ENCODE measurements at regions of chr12 and their contacts with region 1.

Region 1: DNA sequence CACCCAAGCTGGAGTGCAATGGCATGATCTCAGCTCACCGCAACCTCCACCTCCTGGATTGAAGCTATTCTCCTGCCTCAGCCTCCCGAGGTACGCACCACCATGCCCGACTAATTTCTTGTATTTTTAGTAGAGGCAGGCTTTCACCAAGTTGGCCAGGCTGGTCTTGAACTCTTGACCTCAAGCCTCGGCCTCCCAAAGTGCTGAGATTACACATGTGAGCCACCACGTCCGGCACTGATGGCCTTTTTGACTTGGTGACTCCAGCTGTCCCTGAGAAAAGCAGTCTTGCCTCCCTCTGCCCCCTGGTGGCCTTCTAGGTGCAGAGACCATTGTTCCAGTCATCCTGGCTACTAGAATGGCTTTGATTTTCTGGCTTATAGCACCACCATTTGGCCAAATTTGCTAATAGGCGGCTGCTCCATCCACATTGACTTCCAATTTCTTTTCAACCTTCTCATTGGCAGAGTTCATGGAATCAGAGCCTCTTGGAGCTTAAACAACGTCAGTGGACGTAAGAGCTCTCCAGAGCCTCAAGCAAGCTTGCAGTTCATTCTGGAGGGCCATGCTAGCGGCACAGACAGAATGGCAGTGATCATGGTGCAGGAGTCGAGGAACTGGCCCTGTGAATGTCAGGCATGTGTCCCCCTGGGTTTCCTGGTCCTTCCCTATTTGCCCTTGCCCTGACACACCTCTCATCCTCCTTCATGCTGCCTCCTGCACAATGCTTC is 25.4 kb upstream of the EIF4B start:
- DNase-seq: peak; percentile 83

Region 2: DNA sequence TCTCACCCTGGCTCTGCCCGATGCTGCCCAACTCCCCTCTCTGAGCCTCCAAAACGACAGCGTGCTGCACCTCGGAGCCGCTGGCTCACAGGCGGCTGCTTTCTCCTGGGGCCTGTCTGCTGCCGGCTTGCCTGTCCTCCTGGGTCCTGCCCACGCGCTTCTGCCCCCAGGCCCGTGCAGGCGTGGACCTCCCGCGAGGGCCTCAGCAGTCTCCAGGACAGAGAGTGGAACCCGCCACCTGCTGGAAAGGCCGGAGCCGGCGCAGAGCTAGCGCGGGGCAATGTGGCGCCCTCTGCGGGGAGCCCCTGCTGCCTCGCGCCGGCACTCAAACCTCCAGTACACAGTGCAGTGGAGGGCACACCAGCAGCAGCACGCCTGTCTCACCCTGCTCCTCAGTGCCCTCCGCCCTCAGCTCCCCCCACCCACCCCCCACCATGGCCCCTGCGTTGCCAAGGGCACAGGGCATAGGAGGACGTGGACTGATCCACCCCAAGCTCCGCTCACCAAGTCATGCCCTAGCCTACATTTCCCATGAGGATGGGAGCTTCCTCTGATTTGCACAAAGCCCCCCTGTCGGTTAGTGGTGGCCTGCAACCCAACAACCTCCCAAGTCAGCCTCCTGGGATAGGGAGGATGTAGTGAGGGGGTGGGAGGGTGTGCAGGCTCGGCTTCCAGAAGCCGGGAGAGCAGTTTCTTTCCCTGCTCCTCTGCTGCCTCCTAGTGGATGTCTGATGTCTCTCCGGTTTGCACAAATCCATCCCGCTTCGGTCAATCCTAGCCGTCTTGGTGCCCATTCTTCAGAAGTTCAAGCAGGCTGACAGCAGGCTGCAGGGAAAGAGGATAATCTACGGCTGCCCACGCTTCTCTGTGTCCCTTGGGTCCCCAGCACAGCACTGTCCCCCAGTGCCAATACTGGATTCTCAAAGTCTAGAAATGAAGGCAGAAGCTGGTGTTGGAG is 101.2 kb before region 1 on chr12:
- CTCF ChIA-PET with region 1: interaction called, 231 read pairs
- POLR2A ChIA-PET with region 1: interaction called, 13 read pairs
- DNase-seq: peak; percentile 85

Region 3: GRCh38 chr12:52884526-52885293 is 96.1 kb before region 1 on chr12:
- CTCF ChIA-PET with region 1: interaction called, 231 read pairs
- POLR2A ChIA-PET with region 1: interaction called, 13 read pairs
- DNase-seq: peak; percentile 81

Region 4: GRCh38 chr12:52895061-52895887 is 85.6 kb before region 1 on chr12:
- CTCF ChIA-PET with region 1: interaction called, 13 read pairs
- POLR2A ChIA-PET with region 1: no interaction called
- DNase-seq: no peak

Region 5: DNA sequence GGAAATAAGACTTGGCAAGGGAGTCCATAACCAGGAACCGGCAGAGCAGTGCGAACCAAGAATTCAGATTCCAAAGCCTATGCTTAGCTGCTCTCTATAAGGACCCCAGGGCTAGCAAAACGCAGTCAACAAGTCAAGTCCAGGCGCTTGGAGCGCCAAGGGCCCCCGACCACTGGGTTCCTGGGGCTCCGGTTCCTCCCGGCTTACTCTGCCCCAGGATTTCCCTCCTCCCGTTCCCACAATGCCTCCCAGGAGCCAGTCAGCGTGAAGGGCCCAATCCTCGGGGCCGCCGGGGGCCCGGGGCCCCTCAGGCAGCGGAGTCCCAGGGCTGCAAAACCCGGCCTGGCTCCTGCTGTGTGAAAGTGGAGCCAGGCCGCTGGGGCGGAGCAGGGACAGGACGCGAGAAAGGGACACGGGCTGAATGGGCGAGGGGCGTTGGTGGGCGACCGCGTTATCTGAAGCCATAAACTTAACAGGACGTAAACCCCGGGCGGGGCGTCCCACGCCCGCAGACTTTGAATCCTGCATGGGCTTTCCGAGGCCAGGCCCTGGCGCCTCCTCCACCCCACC is 77.5 kb before region 1 on chr12:
- CTCF ChIA-PET with region 1: interaction called, 17 read pairs
- POLR2A ChIA-PET with region 1: no interaction called
- DNase-seq: peak; percentile 95

Region 6: DNA sequence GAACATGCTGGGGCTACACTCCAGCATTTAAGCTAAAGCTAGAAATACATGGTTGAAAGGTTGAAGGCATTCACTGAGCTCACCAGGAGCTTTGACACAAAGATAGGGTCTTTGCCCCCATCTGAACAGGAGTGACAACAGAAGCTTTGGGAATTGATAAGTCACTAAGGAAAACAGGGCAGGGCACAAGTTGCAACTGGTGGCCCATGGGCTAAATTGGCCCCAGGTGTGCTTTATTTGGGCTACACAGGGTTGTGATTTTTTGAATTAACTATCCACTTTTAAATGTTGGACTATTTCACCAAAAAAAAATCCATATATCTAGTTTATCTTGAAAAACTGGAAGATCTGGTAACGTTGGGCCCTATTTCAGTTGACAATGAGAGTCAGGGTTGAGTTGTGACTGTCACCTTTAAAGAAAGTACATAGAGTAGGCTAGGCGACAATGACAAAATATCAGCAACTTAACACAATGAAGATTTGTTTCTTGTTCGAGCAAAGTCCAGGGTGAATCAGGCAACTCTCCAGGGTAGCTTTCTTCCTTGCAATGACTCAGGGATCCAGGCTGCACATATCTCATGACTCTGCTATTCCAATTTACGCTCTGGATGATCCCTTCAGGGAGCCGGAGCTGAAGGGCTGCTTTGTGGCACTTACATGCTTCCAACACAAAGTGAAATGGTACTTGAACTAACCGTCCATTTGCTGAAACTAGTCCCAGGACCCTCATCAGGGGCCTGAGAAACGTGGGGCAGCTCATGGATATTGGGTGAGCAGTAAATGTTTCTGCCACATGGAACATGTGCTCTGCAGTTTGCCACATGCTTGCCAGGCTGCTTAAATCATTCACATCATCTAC is 12.1 kb after region 1 on chr12:
- CTCF ChIA-PET with region 1: interaction called, 13 read pairs
- POLR2A ChIA-PET with region 1: no interaction called
- DNase-seq: no peak

Region 7: DNA sequence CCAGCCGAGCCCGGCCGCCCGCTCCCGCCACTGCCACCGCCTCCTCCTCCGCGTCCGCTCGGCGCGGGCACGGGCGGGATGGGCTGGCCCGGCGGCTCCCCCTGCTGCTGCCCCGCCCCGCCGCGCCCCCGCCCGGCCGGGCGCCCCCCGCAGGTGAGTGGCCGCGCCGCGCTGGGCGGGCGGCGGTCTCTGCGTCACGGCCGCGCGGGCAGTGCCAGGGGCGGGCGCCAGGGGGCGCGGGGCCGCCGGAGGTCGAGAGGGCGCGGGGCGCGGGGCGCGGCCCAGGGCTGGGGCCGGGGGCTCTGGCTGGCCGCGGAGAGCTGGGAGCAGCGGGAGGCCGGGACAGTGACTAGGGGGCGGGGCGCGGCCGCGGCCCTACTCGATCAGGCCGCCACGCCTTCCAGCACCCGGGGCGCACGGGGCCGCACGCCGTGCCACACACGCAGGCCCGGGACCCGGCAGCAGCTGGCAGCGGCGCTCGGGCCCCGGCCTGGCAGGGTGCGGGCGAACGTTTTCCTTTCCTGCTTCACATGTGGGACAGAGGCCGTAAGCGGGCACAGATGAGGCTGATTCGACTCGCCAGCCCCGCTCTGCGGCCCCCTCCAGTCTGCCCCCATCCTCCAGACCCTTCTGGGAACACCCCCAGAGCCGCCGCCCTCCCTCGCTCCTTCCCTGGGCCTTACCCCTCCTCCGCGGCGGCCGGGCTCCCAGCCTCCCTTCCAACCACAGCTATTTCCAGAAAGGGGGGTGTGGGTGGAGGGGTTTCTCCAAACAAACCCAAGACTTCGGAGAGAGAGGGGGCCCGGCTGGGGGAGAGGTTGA is 66.6 kb after region 1 on chr12:
- CTCF ChIA-PET with region 1: interaction called, 10 read pairs
- POLR2A ChIA-PET with region 1: no interaction called
- DNase-seq: peak; percentile 70

Measured in HEK293T (cell line).